ENCODE measurements at regions of chr1 and their contacts with region 1.

Region 1: DNA sequence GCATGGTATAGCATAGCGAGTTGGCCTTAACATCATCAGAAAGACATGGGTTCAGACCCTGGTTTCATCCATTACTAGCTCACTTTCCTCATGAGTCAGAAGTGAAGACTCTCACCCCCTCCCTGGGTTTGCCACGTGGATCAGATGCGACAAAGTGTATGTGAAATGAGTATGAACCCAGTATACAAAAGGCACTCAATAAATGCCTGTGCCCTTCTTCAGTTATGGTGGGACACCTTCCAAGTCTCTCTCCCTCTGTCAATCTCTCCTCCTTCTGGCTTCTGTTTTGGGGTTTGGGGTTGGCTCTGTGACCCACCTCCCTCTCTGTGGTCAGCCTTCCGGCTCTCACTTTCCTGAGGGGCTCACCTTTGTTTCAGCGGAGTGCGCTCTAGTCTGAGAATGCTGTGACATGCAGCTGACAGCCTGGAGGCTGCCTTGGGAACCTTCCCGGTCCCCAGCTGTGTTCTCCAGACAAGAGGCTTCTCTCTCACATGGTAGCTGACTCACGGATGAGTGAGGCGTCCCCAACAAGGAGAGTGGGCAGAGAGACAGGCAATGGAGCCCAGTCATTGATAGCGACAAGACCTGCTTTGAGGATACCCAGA is 155.0 kb upstream of the EDN2 start:
- DNase-seq: no peak
- H3K4me3 Mint-ChIP-seq: peak overlapping the region; percentile 60
- H3K27ac Mint-ChIP-seq: no peak overlapping the region
- H3K4me1 Mint-ChIP-seq: peaks cover 46% of the 10 kb centered on the region
- H3K27me3 Mint-ChIP-seq: no peaks in the 10 kb centered on the region

Region 2: DNA sequence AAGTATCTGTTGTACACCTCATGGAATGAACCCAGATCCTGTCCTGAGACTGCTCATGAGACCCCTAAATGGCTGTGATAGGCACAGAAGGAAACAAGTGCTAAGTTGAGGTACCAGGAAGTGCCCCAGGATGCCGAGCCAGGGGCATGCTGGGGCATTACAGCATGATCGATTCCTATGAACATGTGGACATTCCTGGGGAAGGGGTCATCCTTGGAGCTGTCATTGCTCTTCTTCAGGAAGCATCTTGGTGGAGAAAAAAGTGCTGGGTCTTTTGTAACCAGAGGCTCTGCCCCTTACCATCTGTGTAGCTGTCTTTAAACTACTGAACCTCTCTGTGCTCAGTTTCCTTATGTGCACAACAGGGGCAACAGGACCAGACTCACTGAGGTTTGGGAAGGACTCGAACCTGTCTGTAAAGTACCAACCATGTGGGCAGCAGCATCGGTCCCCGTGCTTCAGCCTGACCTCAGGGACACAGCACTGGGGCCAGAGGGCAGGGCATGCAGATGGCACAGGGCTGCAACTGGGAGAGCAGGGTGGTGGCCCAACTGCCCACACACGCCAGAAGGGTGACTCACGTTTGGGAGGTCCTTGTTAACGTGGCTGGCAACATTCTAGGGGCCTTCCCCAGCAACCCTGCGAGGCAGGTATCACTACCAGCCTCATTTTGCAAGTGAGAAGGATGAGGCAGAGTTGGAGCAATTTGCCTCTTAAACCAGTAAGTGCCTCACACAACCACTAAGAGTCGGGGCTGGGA is 12.6 kb before region 1 on chr1:
- intact Hi-C with region 1: loop called (anchors 2 kb)
- DNase-seq: no peak
- H3K4me3 Mint-ChIP-seq: no peak overlapping the region
- H3K27ac Mint-ChIP-seq: peak overlapping the region; percentile 63
- H3K4me1 Mint-ChIP-seq: peaks cover 65% of the 10 kb centered on the region
- H3K27me3 Mint-ChIP-seq: no peaks in the 10 kb centered on the region

Measured in activated T-helper 2 cell treated with anti-CD3 and anti-CD28 coated beads, Interferon-gamma antibody, Interleukin-2, Interleukin-4, amounts not matched to agents 10 μg/mL and 5 μg/mL and 100 μg/mL, durations not matched to agents 14 hours and 24 hours and 36 hours (primary cell).